ENCODE measurements at regions of chr4 and their contacts with region 1.

Region 1: DNA sequence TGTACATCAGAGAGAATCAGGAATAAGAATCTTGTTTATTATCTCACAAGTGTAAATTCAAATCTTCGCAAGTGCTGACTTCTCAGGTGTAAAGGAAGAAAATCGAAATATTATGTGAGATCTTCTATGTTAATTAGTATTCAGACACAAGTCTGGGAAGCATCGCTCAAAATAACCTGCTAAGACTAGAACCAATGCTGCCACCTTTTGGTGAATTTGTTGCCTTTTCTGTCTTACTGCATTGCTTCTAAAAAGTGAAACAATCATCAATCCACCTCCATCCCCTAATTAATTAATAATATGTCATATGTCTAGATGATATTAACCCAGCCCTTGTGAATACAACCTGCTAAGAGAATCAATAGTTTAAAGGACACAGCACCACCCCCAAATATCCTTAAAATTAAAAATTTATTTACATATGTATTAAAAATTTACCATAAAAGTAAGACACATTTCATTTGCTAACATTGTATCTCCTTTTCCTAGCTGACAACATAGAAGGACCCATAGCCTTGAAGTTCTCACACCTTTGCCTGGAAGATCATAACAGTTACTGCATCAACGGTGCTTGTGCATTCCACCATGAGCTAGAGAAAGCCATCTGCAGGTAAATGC is 3.5 kb downstream of the EPGN start:
- DNase-seq: no peak
- ATAC-seq: no peak

Region 2: DNA sequence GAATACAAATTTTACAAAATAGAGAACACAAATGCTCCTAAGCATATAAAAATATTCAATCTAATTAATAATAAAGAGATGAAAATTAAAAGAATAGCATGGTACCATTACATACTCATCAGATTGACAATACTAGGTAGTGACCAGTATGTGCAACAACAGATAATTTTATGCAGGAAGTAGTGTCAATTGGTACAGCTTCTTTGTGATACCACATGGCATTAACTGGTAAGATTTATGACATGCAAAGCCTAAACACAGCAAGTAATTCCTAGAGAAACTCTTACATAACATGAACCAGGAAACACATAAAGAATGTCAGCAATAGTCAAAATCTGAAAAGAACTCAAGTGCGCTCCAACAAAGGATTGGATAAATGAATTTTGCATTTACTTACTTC is 239.1 kb before region 1 on chr4:
- intact Hi-C with region 1: no loop called
- DNase-seq: no peak
- ATAC-seq: no peak

Region 3: GRCh38 chr4:74157561-74158465 is 154.0 kb before region 1 on chr4 and contains the start of gene MTHFD2L:
- intact Hi-C with region 1: no loop called
- DNase-seq: peak; percentile 97
- ATAC-seq: peak; percentile 99
- total RNA-seq, gene MTHFD2L: 8.5 TPM

Region 4: GRCh38 chr4:74189331-74190043 is 122.3 kb before region 1 on chr4:
- intact Hi-C with region 1: loop called (anchors 10 kb)
- DNase-seq: no peak
- ATAC-seq: no peak

Region 5: GRCh38 chr4:74228691-74229640 is 82.8 kb before region 1 on chr4:
- intact Hi-C with region 1: loop called (anchors 10 kb)
- DNase-seq: peak; percentile 65
- ATAC-seq: peak; percentile 70

Measured in left ventricle myocardium superior (tissue), 1 donor.